Sigmoid colon (tissue), 7 donors: ENCODE measurements at regions of chr10 and their contacts with region 1.

Region 1: GRCh38 chr10:3623746-3624145 is 161.3 kb downstream of the KLF6 start:
- DNase-seq: no peak
- H3K4me3 ChIP-seq: peak overlapping the region in 2 of 4 donors; percentile 4 to 16
- H3K27ac ChIP-seq: peak overlapping the region; percentile 51 to 75 (median 66)
- H3K4me1 ChIP-seq: peaks cover 0 to 35% (median 17%) of the 10 kb centered on the region in 4 donors
- H3K27me3 ChIP-seq: no peaks in the 10 kb centered on the region
- CTCF ChIP-seq: no peak
- EP300 ChIP-seq: peak in 2 of 4 donors; percentile 32 to 53
- POLR2A ChIP-seq: no peak

Region 2: GRCh38 chr10:3570855-3571266 is 52.9 kb before region 1 on chr10:
- intact Hi-C with region 1: loop called (anchors 5 kb)
- DNase-seq: peak; percentile 82
- H3K4me3 ChIP-seq: no peak overlapping the region
- H3K27ac ChIP-seq: peak overlapping the region; percentile 35 to 53 (median 47)
- H3K4me1 ChIP-seq: peaks cover 0 to 15% (median 5%) of the 10 kb centered on the region in 4 donors
- H3K27me3 ChIP-seq: no peaks in the 10 kb centered on the region
- CTCF ChIP-seq: no peak
- EP300 ChIP-seq: no peak
- POLR2A ChIP-seq: no peak

Region 3: GRCh38 chr10:3749600-3749999 is 125.9 kb after region 1 on chr10:
- intact Hi-C with region 1: loop called (anchors 5 kb)
- DNase-seq: peak; percentile 88
- H3K4me3 ChIP-seq: peak overlapping the region in 3 of 4 donors; percentile 20 to 40 (median 40)
- H3K27ac ChIP-seq: peak overlapping the region; percentile 72 to 90 (median 84)
- H3K4me1 ChIP-seq: peaks cover 0 to 25% (median 24%) of the 10 kb centered on the region in 4 donors
- H3K27me3 ChIP-seq: no peaks in the 10 kb centered on the region
- CTCF ChIP-seq: no peak
- EP300 ChIP-seq: peak in 3 of 4 donors; percentile 38 to 86 (median 68)
- POLR2A ChIP-seq: no peak